Natural killer cell (primary cell): ENCODE measurements at regions of chr12 and their contacts with region 1.

Region 1: DNA sequence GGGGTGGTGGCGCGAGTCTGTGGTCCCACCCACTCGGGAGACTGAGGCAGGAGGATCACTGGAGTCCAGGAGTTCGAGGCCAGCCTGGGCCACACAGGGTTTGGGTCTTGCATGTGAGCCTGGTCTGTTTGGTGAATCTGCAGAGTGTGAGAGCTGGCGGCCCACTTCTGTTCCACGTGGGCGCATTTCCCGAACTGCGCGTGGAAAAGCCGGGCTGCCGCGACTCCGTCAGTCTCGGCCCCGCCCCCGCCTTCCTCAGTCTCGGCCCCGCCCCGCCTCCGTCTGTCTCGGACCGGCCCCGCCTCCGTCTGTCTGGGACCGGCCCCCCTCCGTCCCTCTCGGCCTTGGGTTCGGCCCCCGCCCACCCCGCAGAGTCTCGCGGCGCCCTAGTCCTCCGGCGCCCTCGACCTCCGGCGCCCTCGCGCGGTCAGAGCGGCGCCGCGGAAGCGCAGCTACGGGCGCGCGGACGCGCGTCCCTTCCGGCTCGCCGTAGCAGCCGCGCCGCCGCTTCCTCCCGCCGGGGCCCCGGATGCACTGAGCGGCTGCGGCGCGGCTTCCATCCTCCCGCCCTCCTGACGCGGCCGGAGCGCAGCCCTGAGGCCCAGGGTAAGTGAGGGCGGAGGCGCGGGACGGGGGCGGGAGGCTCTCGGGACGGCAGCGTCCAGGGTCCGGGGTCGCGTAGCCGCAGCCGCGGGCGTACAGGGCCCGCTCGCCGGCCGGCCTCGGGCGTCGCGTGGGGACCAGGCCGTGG is at the start of gene EP400:
- DNase-seq: peak; percentile 88 to 96
- ATAC-seq: peak; percentile 91 to 97 (median 93)
- H3K4me3 ChIP-seq: peak within 1 kb of the TSS; percentile 60
- H3K4me3 Mint-ChIP-seq: peak within 1 kb of the TSS; percentile 94
- H3K27ac ChIP-seq: peak within 1 kb of the TSS; percentile 74
- H3K27ac Mint-ChIP-seq: peak within 1 kb of the TSS; percentile 59 to 89
- H3K4me1 ChIP-seq: peaks cover 40% of the 10 kb centered on the region
- H3K4me1 Mint-ChIP-seq: peaks cover 26 to 35% of the 10 kb centered on the region in 2 donors
- H3K27me3 ChIP-seq: no peaks in the 10 kb centered on the region
- H3K27me3 Mint-ChIP-seq: no peaks in the 10 kb centered on the region
- CTCF ChIP-seq: no peak
- total RNA-seq, gene EP400: 62.8 to 81.1 (median 80.1) TPM

Region 2: DNA sequence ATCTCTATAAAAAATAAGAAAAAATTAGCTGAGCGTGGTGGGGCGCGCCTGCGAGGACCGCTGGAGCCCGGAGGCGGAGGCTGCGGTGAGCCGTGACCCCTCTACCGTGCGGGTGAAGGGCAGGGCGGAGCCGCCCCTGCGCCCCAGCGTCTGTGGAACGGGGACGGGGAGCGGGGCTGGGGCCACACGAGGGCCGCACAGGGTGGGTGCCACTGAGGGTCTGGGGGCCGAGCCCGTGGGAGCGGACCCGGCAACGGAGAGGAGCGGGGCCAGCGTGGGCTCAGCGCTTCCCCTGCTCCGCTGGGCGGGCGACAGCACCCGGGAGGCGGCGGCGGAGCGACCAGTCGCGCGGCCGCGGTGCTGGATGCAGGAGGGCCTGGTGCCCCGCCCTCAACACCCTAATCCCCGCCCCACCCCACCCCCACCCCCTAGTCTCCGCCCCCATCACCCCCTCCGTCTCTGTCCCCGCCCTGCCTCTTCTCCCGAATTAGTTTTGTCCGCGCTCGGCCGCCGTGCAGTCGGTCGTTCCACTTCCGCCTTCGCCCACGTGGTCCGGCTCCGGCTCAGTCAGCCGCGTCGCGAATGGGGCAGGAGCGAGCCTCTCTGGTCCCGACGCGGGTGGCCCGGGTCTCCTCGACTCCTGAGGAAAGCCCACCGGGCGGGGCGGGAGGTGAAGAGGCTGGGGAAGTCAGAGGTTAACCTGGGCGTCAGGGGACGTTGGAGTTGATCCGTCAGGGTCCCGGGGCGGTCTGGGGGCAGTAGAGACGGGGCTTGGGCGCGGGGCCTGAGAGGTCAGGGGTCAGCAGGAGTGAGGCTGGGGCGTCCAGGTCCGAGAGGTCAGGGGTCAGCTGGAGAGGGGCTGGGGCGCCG is 20.7 kb before region 1 on chr12 and contains the start of gene PUS1:
- intact Hi-C with region 1: loop called (anchors 1 kb)
- DNase-seq: peak; percentile 90 to 97
- ATAC-seq: peak; percentile 87 to 95 (median 90)
- H3K4me3 ChIP-seq: peak within 1 kb of the TSS; percentile 73
- H3K4me3 Mint-ChIP-seq: peak within 1 kb of the TSS; percentile 97
- H3K27ac ChIP-seq: peak within 1 kb of the TSS; percentile 43
- H3K27ac Mint-ChIP-seq: peak within 1 kb of the TSS; percentile 83 to 95
- H3K4me1 ChIP-seq: peaks cover 30% of the 10 kb centered on the region
- H3K4me1 Mint-ChIP-seq: peaks cover 9 to 26% of the 10 kb centered on the region in 2 donors
- H3K27me3 ChIP-seq: no peaks in the 10 kb centered on the region
- H3K27me3 Mint-ChIP-seq: no peaks in the 10 kb centered on the region
- CTCF ChIP-seq: no peak
- total RNA-seq, gene PUS1: 16.9 to 21.9 (median 20.6) TPM